Mammary epithelial cell (primary cell): ENCODE measurements at regions of chrX and their contacts with region 1.

Region 1: DNA sequence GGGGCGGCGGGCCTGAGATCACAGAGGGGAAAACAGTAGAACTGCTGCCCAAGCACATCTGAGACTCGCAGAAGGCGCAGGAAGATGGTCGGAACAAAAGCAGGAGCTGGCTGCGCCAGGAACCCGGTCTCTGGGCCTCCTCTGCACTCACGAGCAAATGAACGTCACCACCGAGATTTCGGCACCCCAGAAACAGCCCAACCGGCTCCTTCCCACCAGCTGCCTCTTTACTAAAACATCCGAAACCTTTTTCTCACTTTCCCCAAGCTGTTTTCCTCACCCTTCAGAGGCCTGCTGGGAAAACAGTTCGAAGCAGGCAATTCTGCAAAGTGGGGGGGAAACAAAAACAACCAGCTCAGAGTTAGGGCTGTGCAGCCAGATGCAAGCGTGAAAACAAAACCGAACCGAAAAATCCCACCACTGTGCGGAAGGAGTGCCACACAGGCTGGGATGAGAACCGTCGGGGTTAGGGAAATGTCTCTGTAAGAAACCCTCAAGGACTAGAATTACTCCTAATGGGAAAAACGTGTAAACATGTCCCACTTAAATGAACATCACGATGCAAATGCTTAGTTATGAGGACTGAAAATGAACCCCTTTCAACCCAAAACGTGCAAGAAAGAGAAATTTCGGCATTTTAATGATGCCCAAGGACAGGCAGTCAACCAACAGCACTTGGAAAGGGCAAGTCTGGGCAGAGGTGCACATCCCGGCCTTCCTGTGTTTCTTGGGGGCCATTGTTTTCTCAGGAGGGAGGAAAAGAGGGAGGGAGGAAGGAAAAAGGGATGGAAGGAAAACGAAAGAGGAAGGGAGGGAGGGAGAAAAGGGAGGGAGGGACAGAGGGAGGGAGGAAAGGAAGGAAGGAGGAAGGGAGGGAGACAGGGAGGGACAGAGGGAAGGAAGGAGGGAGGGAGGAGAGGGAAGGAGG is 15.8 kb downstream of the DHRSX start:
- DNase-seq: no peak
- H3K4me3 ChIP-seq: no peak overlapping the region
- H3K27ac ChIP-seq: peak overlapping the region; percentile 2
- H3K4me1 ChIP-seq: peaks cover 17% of the 10 kb centered on the region
- H3K27me3 ChIP-seq: no peaks in the 10 kb centered on the region
- CTCF ChIP-seq: no peak

Region 2: DNA sequence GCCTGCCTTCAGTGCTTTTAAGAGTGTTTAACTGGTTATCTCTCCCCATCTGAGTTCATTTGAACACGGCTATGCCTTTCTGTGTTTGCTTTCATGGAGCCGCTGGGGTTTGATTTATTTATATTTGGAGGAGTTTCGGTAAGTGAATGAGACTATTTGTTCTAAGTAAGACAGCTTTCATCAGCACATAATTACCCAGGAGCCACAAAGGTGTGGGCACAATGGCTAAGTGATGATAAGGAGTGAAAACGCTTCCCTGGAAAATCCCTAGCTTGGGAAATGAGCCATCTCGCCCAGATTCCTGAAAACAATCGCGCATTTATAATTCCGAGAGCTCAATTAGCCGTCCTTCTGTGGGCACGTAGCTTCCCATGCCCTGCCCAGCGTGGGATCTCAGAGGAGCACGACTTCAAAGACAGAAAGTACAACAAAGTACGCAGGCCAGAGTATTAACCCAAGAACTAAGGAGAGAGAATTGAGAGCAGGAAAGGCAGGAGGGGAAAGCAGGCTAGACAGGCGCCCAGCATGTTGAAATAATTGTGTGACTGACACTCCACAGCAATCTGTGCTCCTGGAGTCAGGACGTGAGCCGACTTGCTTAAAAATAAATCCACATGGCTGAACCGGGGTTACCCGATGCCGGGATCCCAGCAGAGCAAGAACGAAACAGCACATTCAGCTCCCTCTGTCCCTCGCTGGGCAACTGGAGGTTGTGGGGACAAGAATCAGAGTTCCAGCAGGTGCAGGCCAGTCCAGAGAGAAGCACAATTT is 83.2 kb before region 1 on chrX:
- CTCF ChIA-PET with region 1: no interaction called
- dilution Hi-C with region 1: no loop called
- in situ Hi-C with region 1: no loop called
- intact Hi-C with region 1: loop called (anchors 10 kb)
- DNase-seq: peak; percentile 97
- H3K4me3 ChIP-seq: no peak overlapping the region
- H3K27ac ChIP-seq: peak overlapping the region; percentile 92
- H3K4me1 ChIP-seq: peaks cover 6% of the 10 kb centered on the region
- H3K27me3 ChIP-seq: no peaks in the 10 kb centered on the region
- CTCF ChIP-seq: no peak

Region 3: GRCh38 chrX:2451501-2452316 is 33.3 kb before region 1 on chrX:
- CTCF ChIA-PET with region 1: no interaction called
- dilution Hi-C with region 1: no loop called
- in situ Hi-C with region 1: no loop called
- intact Hi-C with region 1: no loop called
- DNase-seq: no peak
- H3K4me3 ChIP-seq: no peak overlapping the region
- H3K27ac ChIP-seq: no peak overlapping the region
- H3K4me1 ChIP-seq: no peaks in the 10 kb centered on the region
- H3K27me3 ChIP-seq: no peaks in the 10 kb centered on the region
- CTCF ChIP-seq: no peak

Region 4: GRCh38 chrX:2774057-2774456 is 289.1 kb after region 1 on chrX:
- CTCF ChIA-PET with region 1: no interaction called
- dilution Hi-C with region 1: no loop called
- in situ Hi-C with region 1: no loop called
- intact Hi-C with region 1: no loop called
- DNase-seq: no peak
- H3K4me3 ChIP-seq: no peak overlapping the region
- H3K27ac ChIP-seq: no peak overlapping the region
- H3K4me1 ChIP-seq: no peaks in the 10 kb centered on the region
- H3K27me3 ChIP-seq: no peaks in the 10 kb centered on the region
- CTCF ChIP-seq: no peak